HEK293T (cell line): ENCODE measurements at regions of chr6 and their contacts with region 1.

Region 1: GRCh38 chr6:32971581-32972352 is 3.4 kb downstream of the BRD2 start:
- DNase-seq: peak; percentile 91

Region 2: DNA sequence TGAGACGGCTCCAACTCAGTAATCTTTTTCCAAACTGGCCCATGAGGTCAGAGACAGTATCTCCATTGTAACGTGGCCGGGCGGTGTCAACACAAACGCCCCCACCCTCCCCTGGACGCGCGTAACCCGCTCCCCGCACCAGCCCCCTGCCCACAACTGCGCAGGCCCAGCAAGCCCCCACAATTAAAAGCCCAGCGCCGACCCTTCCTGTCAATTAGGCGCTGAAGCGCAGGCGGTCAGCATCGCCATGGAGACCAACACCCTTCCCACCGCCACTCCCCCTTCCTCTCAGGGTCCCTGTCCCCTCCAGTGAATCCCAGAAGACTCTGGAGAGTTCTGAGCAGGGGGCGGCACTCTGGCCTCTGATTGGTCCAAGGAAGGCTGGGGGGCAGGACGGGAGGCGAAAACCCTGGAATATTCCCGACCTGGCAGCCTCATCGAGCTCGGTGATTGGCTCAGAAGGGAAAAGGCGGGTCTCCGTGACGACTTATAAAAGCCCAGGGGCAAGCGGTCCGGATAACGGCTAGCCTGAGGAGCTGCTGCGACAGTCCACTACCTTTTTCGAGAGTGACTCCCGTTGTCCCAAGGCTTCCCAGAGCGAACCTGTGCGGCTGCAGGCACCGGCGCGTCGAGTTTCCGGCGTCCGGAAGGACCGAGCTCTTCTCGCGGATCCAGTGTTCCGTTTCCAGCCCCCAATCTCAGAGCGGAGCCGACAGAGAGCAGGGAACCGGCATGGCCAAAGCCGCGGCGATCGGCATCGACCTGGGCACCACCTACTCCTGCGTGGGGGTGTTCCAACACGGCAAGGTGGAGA is 1156.5 kb before region 1 on chr6 and contains the starts of genes HSPA1A and HSPA1L:
- CTCF ChIA-PET with region 1: no interaction called
- POLR2A ChIA-PET with region 1: interaction called, 15 read pairs
- DNase-seq: no peak

Region 3: DNA sequence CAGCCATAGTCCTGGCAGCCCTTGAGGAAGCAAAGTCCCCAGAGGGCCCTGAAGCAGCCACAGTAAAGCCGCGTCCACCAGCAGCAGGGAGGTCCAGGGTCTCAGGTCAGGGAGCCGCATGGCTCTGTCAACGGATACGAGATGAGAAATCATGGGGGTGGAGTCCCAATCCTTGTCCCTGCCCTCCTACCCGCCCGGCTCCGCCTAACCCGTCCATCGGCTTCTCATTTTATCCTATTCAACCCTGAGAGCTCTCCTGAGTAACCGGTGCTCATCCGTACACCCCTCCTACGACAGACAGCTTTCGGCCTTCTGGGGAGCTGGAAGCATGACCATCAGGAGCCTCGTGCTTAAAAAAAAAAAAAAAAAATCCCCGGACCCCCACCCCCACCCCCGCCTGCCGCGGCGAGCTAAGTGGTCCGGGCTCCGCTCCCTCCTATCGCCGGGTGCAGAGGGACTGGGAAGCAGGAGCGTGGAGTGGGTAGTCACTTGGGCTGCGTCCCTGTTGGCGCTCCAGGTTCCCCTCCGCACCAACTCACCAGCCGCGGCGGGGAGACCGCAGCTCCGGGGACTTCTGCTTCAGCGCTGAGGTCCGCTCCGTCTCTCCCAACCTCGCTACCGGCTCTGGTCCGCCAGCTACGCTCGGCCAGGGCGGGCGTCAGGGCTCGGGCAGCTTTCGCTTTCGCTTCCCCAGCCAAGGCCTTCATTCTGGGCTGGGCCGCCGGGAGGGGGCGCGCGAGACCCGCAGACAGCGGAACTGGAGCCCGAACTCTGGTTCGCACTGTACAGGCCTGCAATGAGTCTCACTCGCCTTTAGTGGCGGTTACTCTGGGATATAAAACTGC is 133.4 kb before region 1 on chr6 and contains the start of gene TAP2:
- CTCF ChIA-PET with region 1: interaction called, 7 read pairs
- POLR2A ChIA-PET with region 1: interaction called, 21 read pairs
- DNase-seq: peak; percentile 93

Region 4: DNA sequence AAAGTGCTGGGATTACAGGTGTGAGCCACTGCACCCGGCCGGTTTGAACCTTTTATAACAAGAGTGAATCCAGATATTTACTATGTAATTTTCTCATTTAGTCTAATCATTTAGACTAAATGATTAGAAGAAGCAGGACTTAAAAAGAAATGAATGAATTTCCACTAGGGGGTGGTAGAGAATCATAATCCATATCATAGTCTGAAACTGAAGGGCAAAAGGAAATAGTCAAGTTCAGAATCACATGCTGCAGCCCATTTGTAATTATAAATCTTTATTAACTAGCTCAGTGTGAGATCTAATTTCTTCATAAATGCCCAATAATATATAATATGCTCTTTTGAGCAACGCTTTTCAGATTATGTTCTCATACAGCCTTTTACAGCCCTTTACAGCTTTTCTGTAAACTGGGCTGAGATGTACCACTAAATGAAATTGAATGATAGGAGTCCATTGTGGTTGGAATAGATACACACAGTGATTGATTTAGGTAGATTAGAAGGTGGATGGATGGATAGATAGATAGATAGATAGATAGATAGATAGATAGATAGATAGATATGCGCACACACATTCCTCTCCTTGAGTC is 86.0 kb before region 1 on chr6:
- CTCF ChIA-PET with region 1: no interaction called
- POLR2A ChIA-PET with region 1: interaction called, 10 read pairs
- DNase-seq: no peak

Region 5: DNA sequence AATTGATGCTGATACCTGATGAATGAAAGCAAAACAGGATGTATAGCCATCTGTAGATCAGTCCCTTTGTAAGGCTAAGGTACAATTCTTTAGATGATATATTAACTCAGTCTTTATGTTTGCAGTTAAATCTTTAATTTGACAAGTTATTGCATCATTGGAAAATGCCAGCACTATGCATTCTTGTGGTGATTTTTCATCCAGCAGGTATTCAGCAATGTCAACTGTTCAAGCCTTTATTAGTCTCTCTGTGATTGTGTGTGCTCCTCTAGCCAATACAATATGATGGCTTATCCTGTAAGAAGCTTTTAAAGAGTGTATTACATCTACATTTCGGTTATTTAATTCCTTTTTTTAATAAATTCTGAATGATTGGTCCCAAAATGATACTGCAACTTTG is 65.2 kb before region 1 on chr6:
- CTCF ChIA-PET with region 1: no interaction called
- POLR2A ChIA-PET with region 1: interaction called, 24 read pairs
- DNase-seq: no peak

Region 6: GRCh38 chr6:32940656-32941213 is 31.0 kb before region 1 on chr6 and contains the start of gene HLA-DMB:
- CTCF ChIA-PET with region 1: no interaction called
- POLR2A ChIA-PET with region 1: interaction called, 113 read pairs
- DNase-seq: peak; percentile 92

Region 7: GRCh38 chr6:32984605-32985389 is 13.0 kb after region 1 on chr6:
- CTCF ChIA-PET with region 1: interaction called, 33 read pairs
- POLR2A ChIA-PET with region 1: interaction called, 369 read pairs
- DNase-seq: peak; percentile 77